ENCODE measurements at regions of chr20 and their contacts with region 1.

Region 1: GRCh38 chr20:63641792-63642544 is 11.3 kb downstream of the STMN3 start:
- DNase-seq: peak; percentile 99
- H3K4me3 ChIP-seq: peak overlapping the region in 1 of 2 experiments; percentile 44; a peak in 2 of 4 replicates
- H3K27ac ChIP-seq: no peak overlapping the region; a peak in 1 of 4 replicates
- H3K4me1 ChIP-seq: peaks cover 0 to 13% of the 10 kb centered on the region in 2 experiments; a peak in 1 of 4 replicates
- H3K27me3 ChIP-seq: no peaks in the 10 kb centered on the region
- CTCF ChIP-seq: peak; percentile 17
- EP300 ChIP-seq: no peak
- RAD21 ChIP-seq: no peak

Region 2: DNA sequence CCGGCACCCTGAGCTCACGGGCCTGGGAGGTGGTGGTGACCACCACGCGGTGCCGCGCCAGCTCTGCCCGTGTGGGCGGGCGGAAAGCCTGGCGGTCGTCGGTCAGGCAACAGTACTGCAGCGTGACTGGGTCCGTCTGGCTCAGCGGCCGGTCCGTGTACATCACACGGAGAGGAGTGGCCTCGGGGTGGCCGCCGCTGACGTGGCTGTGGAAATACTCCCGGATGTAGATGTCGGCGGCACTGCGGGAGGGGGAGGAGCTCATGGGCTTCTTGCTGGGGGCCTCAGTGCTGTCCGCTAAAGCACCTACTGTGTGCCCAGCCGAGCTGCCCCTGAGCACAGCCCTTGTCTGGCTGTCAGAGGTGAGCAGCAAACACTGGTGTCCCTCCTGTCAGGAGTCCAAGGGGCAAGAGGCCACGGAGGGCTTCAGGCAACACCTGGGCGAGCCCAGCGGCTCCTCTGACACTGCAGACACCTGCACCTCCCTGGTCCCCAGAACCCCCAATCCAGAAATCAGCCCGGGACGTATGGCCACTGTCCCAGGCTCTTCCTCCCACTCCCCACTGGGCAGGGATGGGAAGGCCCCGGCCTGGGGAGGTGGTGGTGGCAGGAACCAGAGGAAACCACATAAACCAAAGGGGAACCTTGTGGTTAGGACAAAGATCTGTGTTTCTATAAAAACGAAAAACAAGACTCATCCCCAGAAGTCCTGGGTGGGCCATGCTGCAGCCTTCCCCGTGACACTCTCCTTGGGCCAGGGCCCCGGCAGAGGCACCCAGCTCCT is 74.4 kb before region 1 on chr20:
- CTCF ChIA-PET with region 1: no interaction called
- POLR2A ChIA-PET with region 1: no interaction called
- DNase-seq: no peak
- H3K4me3 ChIP-seq: no peak overlapping the region
- H3K27ac ChIP-seq: no peak overlapping the region
- H3K4me1 ChIP-seq: no peaks in the 10 kb centered on the region
- H3K27me3 ChIP-seq: no peaks in the 10 kb centered on the region
- CTCF ChIP-seq: no peak
- EP300 ChIP-seq: no peak
- RAD21 ChIP-seq: no peak

Region 3: DNA sequence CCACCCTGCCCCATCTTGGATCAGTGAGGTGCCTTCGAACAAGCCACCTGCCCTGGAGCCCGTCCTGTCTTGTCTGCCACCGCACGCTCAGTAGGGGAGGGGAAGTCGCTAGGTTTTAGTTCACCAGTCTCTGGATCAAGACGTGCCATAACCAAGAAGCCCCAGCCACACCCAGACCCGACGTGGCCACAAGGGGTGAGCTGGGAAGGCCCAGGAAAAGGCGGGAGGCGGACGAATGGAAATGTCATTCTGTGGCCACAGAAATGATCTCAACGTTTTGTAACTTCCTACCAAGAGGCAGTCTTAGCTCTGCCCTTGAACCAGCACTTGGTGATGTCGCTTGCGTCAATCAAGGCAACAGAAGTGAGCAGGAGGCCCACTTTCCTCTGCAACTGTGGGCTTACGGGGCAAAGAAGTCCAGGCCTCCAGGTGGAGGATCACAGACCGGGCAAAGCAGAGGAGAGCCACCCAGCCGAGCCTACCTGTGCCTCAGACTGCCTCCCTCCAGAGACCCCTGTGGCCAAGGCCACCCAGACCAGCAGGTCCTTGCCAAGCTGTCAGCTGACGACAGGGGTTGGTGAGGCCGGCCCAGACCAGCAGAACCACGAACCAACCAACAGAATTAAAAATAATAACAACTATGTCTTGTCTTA is 29.6 kb before region 1 on chr20:
- CTCF ChIA-PET with region 1: no interaction called
- POLR2A ChIA-PET with region 1: no interaction called
- DNase-seq: no peak
- H3K4me3 ChIP-seq: no peak overlapping the region
- H3K27ac ChIP-seq: no peak overlapping the region
- H3K4me1 ChIP-seq: no peaks in the 10 kb centered on the region; a peak in 1 of 4 replicates
- H3K27me3 ChIP-seq: no peaks in the 10 kb centered on the region
- CTCF ChIP-seq: no peak
- EP300 ChIP-seq: no peak
- RAD21 ChIP-seq: no peak

Region 4: GRCh38 chr20:63653078-63653973 is 11.4 kb after region 1 on chr20 and contains the start of gene STMN3:
- CTCF ChIA-PET with region 1: interaction called, 5 read pairs
- POLR2A ChIA-PET with region 1: interaction called, 12 read pairs
- DNase-seq: peak; percentile 89
- H3K4me3 ChIP-seq: peak within 1 kb of the TSS; percentile 67 to 76
- H3K27ac ChIP-seq: peak within 1 kb of the TSS; percentile 60 to 97
- H3K4me1 ChIP-seq: peaks cover 8 to 26% of the 10 kb centered on the region in 2 experiments; a peak in 2 of 4 replicates
- H3K27me3 ChIP-seq: no peaks in the 10 kb centered on the region
- CTCF ChIP-seq: no peak
- EP300 ChIP-seq: no peak
- RAD21 ChIP-seq: no peak
- polyA plus RNA-seq, gene STMN3: 89.8 and 111 TPM in 2 replicates